Pancreas (tissue), 10 donors: ENCODE measurements at regions of chr22 and their contacts with region 1.

Region 1: GRCh38 chr22:31983911-31984656 is 39.7 kb downstream of the YWHAH start:
- DNase-seq: no peak
- ATAC-seq: no peak
- H3K4me3 ChIP-seq: no peak overlapping the region
- H3K27ac ChIP-seq: no peak overlapping the region
- H3K4me1 ChIP-seq: no peaks in the 10 kb centered on the region
- H3K27me3 ChIP-seq: no peaks in the 10 kb centered on the region
- CTCF ChIP-seq: no peak

Region 2: DNA sequence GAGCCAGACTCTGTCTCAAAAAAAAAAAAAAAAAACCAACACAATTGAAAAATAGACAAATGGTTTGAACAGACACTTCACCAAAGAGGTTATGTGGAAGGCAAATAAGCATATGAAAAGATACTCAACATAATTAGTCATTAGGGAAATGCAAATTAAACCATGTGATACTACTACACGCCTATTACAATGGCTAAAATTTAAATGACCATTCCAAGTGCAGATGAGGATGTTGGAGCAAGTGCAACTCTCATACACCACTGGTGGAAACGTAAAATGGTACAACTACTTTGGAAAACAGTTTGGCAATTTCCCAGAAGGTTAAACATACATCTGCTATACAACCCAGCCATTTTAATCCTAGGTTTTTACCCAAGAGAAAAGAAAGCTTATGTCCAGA is 518.8 kb before region 1 on chr22:
- intact Hi-C with region 1: no loop called
- DNase-seq: no peak
- ATAC-seq: no peak
- H3K4me3 ChIP-seq: no peak overlapping the region
- H3K27ac ChIP-seq: no peak overlapping the region
- H3K4me1 ChIP-seq: no peaks in the 10 kb centered on the region
- H3K27me3 ChIP-seq: no peaks in the 10 kb centered on the region
- CTCF ChIP-seq: no peak

Region 3: DNA sequence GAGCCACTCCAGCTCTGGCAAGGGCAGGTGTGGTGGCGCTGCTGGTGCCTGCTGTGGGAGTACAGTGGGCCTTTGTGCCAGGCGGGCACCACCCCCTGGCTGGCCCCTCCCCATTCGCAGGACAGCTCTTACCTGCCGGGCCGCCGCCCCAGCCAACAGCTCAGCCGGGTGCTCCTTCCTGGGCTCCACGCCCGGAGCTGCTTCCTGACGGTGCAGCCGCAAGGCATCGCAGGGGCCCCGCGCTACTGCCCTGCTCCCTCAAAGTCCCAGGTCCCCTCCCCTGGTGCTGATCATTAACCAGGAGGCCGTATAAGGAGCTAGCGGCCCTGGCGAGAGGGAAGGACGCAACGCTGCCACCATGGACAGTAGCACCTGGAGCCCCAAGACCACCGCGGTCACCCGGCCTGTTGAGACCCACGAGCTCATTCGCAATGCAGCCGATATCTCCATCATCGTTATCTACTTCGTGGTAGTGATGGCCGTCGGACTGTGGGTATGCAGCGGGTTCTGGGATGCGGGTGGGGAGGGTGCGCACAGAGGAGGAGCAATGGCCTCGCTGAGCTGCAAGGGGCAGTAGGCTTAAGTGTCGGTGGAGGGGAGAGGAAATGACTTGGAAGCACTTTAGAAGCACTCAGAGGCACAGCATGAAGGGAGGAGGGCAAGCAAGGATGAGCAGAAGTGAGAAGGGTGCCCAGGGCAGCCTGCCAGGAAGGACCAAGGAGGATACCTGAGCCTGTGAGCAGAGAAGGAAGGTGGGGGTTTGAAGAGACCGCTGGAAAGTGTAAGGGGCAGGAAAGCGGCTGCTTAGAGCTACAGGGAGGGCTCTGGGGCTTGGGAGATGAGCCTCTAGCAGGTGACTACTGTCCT is 59.1 kb after region 1 on chr22 and contains the start of gene SLC5A1:
- intact Hi-C with region 1: no loop called
- DNase-seq: peak; percentile 71 to 91 (median 78)
- ATAC-seq: peak; percentile 91 to 97 (median 94)
- H3K4me3 ChIP-seq: peak within 1 kb of the TSS in 1 of 4 donors; percentile 14
- H3K27ac ChIP-seq: peak within 1 kb of the TSS in 2 of 4 donors; percentile 19 to 33
- H3K4me1 ChIP-seq: no peaks in the 10 kb centered on the region
- H3K27me3 ChIP-seq: no peaks in the 10 kb centered on the region
- CTCF ChIP-seq: no peak
- total RNA-seq, gene SLC5A1: 0.51 to 3.2 (median 2.6) TPM

Region 4: GRCh38 chr22:32080904-32081303 is 96.8 kb after region 1 on chr22:
- intact Hi-C with region 1: loop called in 1 of 3 experiments (anchors 5 kb)
- DNase-seq: peak in 1 of 6 donors; percentile 28
- ATAC-seq: peak; percentile 53 to 77 (median 68)
- H3K4me3 ChIP-seq: no peak overlapping the region
- H3K27ac ChIP-seq: no peak overlapping the region
- H3K4me1 ChIP-seq: peaks cover 0 to 11% (median 0%) of the 10 kb centered on the region in 3 donors
- H3K27me3 ChIP-seq: no peaks in the 10 kb centered on the region
- CTCF ChIP-seq: peak; percentile 19 to 35 (median 28)

Region 5: GRCh38 chr22:32123657-32124056 is 139.6 kb after region 1 on chr22:
- intact Hi-C with region 1: no loop called
- DNase-seq: no peak
- ATAC-seq: no peak
- H3K4me3 ChIP-seq: no peak overlapping the region
- H3K27ac ChIP-seq: no peak overlapping the region
- H3K4me1 ChIP-seq: no peaks in the 10 kb centered on the region
- H3K27me3 ChIP-seq: no peaks in the 10 kb centered on the region
- CTCF ChIP-seq: no peak

Region 6: DNA sequence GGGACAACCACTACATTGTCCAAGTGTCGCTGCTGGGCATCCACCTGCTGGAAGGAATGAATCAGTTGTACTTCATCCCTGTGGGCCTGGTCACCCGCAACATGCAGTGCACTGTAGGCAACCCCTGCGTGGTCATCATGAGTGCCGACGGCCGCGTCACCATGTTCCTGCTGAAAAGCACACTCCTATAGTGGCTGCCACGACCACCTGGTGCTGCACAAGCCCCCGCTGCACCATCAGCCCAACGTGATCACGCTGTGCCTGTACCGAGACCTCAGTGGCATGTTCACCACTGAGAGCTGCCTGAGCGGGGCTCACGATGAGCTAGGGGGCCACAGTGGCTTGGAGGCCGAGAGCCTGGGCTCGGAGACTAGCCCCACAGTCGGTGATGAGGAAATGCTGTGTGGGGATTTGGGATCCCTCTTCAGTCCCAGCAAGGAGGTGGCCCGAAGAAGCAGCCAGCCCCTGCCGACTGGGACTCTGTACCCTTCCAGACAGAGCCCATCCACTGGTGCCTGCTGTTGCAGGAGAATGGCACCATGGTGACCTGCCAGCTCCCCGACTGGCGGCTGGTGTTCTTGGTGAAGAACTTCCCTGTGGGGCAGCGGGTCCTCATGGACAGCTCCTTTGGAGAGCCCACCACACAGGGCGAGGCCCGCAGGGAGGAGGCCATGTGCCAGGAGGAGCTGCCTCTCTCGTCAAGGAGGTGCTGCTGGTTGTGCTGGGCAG is 286.7 kb after region 1 on chr22:
- intact Hi-C with region 1: loop called in 1 of 3 experiments (anchors 10 kb)
- DNase-seq: no peak
- ATAC-seq: no peak
- H3K4me3 ChIP-seq: no peak overlapping the region
- H3K27ac ChIP-seq: no peak overlapping the region
- H3K4me1 ChIP-seq: no peaks in the 10 kb centered on the region
- H3K27me3 ChIP-seq: no peaks in the 10 kb centered on the region
- CTCF ChIP-seq: no peak